ENCODE measurements at regions of chrX and their contacts with region 1.

Region 1: GRCh38 chrX:132631579-132632232 is 142.9 kb upstream of the MBNL3 start:
- DNase-seq: no peak
- ATAC-seq: peak in 1 of 2 donors; percentile 33
- H3K4me3 ChIP-seq: no peak overlapping the region
- H3K27ac ChIP-seq: no peak overlapping the region
- H3K4me1 ChIP-seq: no peaks in the 10 kb centered on the region
- H3K27me3 ChIP-seq: no peaks in the 10 kb centered on the region
- CTCF ChIP-seq: peak in 4 of 5 experiments; percentile 7 to 50 (median 28)
- POLR2A ChIP-seq: no peak

Region 2: DNA sequence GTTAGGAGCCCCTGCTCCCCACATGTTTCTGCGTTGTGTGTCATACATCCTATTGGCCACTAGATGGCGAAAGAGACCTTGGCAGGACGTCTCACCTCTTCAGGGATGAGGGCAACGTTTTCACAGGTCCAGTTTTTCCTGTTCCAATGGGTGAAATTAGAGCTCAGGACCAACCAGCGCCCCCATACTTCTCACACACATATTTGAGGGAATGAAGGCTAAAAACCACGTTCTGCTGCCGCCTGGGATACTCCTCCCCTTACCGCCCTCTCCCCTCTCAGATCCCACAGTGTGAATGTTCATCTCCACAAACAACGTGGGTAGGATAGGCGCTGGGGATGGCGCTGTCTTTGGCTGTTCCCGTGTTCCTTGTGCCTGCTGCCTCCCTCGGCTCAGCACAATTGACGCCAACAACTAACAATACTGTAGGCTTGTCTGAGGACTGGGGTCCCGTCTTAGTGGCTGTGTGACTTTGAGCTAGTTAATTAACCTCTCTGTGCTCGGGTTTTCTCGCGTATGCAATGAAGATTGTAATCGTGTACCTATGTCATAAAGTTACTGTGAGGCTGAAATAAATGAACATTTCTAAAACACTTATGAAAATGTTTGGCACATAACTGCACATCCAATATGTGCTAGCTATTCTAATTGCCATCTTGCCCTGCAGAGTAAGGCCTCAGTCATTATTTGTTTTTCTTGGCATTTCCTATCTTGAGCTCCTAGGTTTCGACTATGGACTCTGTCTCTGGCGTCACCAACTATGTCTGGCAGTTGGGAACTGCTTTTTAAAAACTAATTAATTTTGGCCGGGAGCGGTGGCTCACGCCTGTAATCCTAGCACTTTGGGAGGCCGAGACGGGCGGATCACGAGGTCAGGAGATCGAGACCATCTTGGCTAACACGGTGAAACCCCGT is 790.0 kb before region 1 on chrX:
- in situ Hi-C with region 1: no loop called
- intact Hi-C with region 1: loop called (anchors 5 kb)
- DNase-seq: no peak
- ATAC-seq: no peak
- H3K4me3 ChIP-seq: no peak overlapping the region
- H3K27ac ChIP-seq: no peak overlapping the region
- H3K4me1 ChIP-seq: no peaks in the 10 kb centered on the region
- H3K27me3 ChIP-seq: no peaks in the 10 kb centered on the region
- CTCF ChIP-seq: peak; percentile 33 to 91 (median 71)
- POLR2A ChIP-seq: no peak